ENCODE measurements at regions of chr12 and their contacts with region 1.

Region 1: DNA sequence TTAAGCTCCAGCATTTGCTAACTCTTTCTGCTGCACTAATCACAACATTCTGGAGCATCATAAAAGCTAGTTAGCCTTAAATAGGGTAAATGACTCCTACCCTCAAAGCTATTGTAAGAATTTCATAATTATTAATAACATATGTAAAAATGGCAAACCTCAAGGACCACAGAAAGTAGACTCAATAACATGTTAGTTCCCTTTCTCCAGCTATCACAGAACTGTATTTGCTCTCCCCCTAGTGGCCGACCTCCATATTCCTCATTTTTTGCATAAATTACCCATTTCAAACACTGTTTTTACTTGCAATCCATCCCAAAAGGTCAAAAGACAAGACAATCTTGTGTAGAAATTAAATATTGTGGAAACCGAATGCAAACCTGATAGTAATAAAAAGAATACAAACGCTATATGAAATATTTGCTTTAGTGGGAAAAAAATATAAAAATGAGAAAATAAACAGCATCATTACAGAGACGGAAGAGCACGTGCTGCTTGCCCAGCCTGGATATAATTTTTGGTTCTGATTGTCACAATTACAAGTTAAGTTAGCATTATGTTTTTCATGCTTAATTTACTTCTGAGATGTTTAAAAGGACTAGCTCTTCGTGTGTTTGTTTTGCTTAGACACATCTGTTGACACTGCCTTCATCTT is 97.9 kb downstream of the RERGL start:
- DNase-seq: peak; percentile 28
- ATAC-seq: no peak
- H3K4me3 Mint-ChIP-seq: no peak overlapping the region
- H3K27ac Mint-ChIP-seq: no peak overlapping the region
- H3K4me1 Mint-ChIP-seq: no peaks in the 10 kb centered on the region
- H3K27me3 Mint-ChIP-seq: no peaks in the 10 kb centered on the region

Region 2: DNA sequence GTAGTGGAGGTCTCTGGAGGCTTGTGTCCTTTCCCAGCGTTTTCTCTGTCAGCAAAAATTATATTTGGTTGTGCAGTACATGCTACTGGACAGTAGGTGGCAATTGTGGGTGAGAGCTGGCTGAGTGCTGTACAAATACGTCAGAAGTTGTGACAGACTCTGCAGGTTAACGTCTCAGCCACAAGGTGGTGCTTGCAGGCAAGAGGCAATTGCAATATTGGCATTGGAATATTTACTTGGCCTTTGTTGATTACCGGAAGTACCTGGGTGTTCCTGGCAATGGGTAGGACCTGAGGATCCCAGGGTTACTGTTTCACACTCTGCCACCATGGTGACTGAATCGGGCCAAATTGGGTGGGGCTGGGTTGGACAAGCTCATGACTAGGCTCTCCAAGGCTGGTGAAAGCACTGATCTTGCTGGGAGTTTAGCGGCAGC is 1052.2 kb before region 1 on chr12:
- CTCF ChIA-PET with region 1: no interaction called
- POLR2A ChIA-PET with region 1: no interaction called
- intact Hi-C with region 1: loop called in 1 of 2 experiments (anchors 5 kb)
- DNase-seq: peak; percentile 41
- ATAC-seq: peak; percentile 58
- H3K4me3 Mint-ChIP-seq: no peak overlapping the region
- H3K27ac Mint-ChIP-seq: no peak overlapping the region
- H3K4me1 Mint-ChIP-seq: no peaks in the 10 kb centered on the region
- H3K27me3 Mint-ChIP-seq: no peaks in the 10 kb centered on the region

Region 3: GRCh38 chr12:18139989-18140596 is 148.0 kb after region 1 on chr12:
- CTCF ChIA-PET with region 1: no interaction called
- POLR2A ChIA-PET with region 1: no interaction called
- intact Hi-C with region 1: no loop called
- DNase-seq: no peak
- ATAC-seq: no peak
- H3K4me3 Mint-ChIP-seq: no peak overlapping the region
- H3K27ac Mint-ChIP-seq: no peak overlapping the region
- H3K4me1 Mint-ChIP-seq: no peaks in the 10 kb centered on the region
- H3K27me3 Mint-ChIP-seq: no peaks in the 10 kb centered on the region

Region 4: DNA sequence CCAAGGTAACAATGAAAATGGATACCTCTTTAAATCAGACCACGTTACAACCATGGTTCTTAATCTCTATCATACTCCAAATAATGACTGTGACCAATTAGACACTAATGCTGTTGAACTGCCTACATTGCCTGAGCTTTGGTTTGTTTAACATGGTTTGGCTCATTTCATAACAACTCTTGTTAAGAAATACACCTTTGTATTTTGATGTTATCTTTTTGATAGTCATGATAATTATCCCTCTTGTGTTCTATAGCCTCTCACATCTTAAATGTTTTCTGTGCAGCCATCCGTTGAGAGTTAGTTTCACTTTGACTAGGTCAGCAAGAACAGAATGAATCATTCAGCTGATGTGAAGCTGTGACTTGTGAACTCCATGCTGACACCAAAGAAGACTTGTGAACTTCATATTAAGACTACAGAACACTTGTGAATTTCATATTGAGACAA is 173.3 kb after region 1 on chr12:
- CTCF ChIA-PET with region 1: no interaction called
- POLR2A ChIA-PET with region 1: no interaction called
- intact Hi-C with region 1: no loop called
- DNase-seq: peak; percentile 11
- ATAC-seq: peak; percentile 94
- H3K4me3 Mint-ChIP-seq: no peak overlapping the region
- H3K27ac Mint-ChIP-seq: no peak overlapping the region
- H3K4me1 Mint-ChIP-seq: peaks cover 7% of the 10 kb centered on the region
- H3K27me3 Mint-ChIP-seq: no peaks in the 10 kb centered on the region